Activated CD4-positive, alpha-beta T cell treated with anti-CD3 and anti-CD28 coated beads, Interleukin-2, amount 10 ng/mL, durations not matched to agents 7 days and 5 days (primary cell): ENCODE measurements at regions of chr12 and their contacts with region 1.

Region 1: DNA sequence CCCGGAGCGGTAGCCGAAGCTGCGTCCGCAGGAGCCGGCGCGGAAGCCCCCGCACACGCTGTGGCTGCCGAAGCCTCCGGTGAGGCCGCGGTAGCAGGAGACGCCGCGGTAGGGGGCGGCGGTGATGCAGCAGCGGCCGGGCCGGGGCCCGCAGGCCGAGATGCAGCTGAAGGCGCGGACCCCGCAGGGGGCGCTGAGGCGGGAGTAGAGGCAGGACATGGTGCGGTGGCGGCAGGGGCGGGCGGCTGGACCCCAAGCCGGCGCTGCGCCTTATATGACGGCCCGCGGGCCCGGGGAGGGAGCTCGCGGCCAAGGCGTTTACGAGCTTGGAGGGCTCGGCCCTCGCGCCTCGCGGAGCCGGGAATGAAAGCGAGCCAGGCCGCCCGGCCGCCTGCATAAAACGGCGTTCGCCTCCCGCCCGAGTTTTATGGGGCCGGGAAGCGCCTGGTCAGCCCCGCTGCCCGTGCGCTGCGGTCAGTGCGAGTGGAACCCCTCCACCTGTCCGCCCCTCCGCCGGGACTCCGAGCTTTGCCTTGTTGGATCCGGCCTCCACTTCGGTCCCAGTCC is 16.0 kb upstream of the KRT86 start:
- DNase-seq: no peak
- H3K4me3 Mint-ChIP-seq: no peak overlapping the region
- H3K27ac Mint-ChIP-seq: no peak overlapping the region
- H3K4me1 Mint-ChIP-seq: peaks cover 33% of the 10 kb centered on the region
- H3K27me3 Mint-ChIP-seq: peaks cover 69% of the 10 kb centered on the region

Region 2: GRCh38 chr12:52270541-52271070 is 12.2 kb after region 1 on chr12:
- CTCF ChIA-PET with region 1: no interaction called
- POLR2A ChIA-PET with region 1: no interaction called
- DNase-seq: no peak
- H3K4me3 Mint-ChIP-seq: no peak overlapping the region
- H3K27ac Mint-ChIP-seq: no peak overlapping the region
- H3K4me1 Mint-ChIP-seq: no peaks in the 10 kb centered on the region
- H3K27me3 Mint-ChIP-seq: peaks cover 47% of the 10 kb centered on the region

Region 3: DNA sequence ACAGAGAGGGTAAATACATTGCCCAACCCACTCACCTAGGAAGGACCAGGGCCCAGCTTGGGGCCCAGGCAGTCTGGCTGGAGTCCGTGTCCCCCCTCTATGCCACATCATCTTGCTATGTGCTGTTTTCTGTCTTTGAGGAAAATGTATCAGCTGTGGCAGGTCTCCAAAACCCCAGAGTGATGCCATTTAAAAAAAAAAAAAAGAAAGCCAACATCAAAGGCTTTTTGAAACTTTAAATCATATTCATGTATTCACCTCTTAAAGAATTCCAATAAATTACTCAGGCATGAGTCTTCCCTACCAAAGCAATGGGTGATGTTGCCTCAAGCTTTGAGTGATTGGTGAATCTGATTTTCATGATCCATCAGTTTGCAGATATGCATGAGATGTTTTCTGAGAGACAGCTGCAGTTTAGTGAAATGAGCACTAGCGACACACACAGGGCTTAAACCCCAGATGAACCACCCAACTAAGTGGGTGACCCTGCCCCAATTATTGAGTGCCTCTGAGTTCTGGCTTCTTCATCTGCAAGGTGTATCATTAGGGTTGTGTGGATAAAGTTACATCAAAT is 26.8 kb after region 1 on chr12:
- CTCF ChIA-PET with region 1: interaction called, 12 read pairs
- POLR2A ChIA-PET with region 1: no interaction called
- DNase-seq: no peak
- H3K4me3 Mint-ChIP-seq: no peak overlapping the region
- H3K27ac Mint-ChIP-seq: no peak overlapping the region
- H3K4me1 Mint-ChIP-seq: peaks cover 11% of the 10 kb centered on the region
- H3K27me3 Mint-ChIP-seq: peaks cover 7% of the 10 kb centered on the region